ENCODE measurements at regions of chr3 and their contacts with region 1.

Region 1: DNA sequence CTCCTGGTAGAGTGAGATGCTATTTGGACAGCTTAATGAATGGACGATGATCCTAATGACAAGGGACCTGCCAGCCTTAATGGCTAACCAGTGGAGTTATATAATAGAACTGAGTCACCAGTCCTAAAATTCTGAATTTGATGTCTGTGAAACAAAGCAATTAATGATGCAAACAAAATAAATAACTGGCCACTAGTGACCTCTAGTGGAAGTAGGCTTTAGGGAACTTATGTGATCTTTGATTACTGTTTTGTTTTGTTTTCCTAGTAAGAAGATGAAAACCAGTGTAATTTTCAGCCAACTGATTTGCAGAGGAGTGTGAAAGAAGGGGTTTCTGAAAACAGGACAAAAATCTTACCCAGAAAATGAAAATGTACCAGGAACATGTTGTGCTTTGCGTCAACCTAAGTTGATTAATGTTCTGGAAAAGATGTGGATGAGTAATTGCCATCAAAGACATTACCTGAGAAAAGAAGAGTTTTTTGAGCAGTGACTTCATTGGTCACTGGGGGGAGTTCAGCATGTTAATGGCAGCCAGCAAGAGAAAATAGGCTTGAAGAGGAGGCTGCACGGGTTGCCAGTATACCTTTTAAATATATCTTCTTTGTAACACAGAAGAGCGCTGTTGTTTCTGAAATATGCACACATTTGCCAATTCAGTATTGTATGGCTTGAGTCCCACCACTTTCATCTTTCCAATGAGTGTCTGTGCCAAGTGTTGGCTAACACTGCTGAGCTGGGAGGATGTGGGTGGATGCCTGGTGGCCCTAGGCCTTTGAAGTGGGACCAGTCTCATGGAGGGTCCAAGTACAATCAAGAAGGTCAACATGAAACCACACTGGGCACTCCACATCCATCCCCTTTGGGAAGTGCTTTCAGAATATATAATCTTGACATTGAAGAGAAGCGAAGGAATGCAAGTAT is 9.3 kb downstream of the VEPH1 start:
- ATAC-seq: peak in 7 of 8 experiments; percentile 21 to 76 (median 42)
- H3K4me3 ChIP-seq: no peak overlapping the region
- H3K27ac ChIP-seq: no peak overlapping the region
- H3K4me1 ChIP-seq: no peaks in the 10 kb centered on the region

Region 2: GRCh38 chr3:157174649-157175498 is 319.0 kb before region 1 on chr3:
- in situ Hi-C with region 1: loop called in 1 of 9 experiments (anchors 25 kb)
- ATAC-seq: peak; percentile 83 to 95 (median 91)
- H3K4me3 ChIP-seq: peak overlapping the region; percentile 46 to 71 (median 52)
- H3K27ac ChIP-seq: peak overlapping the region; percentile 78 to 92
- H3K4me1 ChIP-seq: peaks cover 6 to 7% of the 10 kb centered on the region in 2 donors

Region 3: DNA sequence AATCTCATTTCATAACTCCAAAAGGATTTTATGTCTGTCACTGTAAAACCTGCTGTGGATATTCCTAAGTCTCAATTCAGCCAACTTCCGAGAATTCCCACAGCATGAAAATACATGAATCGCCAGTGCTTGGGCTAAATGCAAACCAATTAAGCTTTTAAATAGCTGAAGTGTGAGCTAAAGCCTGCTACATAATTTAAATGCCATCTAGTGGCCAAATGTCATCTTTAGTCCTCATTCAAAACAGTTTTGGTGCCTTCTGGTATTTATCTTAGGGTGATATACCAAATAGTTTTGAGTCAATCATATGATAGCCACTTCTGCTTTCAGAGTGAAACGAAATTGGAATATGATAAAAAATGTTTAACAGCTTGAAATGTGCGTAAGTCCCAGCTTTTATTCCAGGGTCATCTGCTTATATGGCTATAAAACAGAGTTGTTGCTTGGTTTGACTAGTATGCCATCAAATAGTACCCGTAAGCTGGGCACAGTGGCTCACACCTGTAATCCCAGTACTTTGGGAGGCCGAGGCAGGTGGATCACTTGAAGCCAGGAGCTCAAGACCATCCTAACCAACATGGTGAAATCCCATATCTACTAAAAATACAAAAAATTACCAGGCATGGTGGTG is 292.1 kb before region 1 on chr3:
- in situ Hi-C with region 1: loop called in 7 of 9 experiments (anchors 10 to 25 kb)
- ATAC-seq: peak in 4 of 8 experiments; percentile 43 to 88 (median 80)
- H3K4me3 ChIP-seq: no peak overlapping the region
- H3K27ac ChIP-seq: no peak overlapping the region
- H3K4me1 ChIP-seq: peaks cover 3 to 5% of the 10 kb centered on the region in 2 donors

Region 4: DNA sequence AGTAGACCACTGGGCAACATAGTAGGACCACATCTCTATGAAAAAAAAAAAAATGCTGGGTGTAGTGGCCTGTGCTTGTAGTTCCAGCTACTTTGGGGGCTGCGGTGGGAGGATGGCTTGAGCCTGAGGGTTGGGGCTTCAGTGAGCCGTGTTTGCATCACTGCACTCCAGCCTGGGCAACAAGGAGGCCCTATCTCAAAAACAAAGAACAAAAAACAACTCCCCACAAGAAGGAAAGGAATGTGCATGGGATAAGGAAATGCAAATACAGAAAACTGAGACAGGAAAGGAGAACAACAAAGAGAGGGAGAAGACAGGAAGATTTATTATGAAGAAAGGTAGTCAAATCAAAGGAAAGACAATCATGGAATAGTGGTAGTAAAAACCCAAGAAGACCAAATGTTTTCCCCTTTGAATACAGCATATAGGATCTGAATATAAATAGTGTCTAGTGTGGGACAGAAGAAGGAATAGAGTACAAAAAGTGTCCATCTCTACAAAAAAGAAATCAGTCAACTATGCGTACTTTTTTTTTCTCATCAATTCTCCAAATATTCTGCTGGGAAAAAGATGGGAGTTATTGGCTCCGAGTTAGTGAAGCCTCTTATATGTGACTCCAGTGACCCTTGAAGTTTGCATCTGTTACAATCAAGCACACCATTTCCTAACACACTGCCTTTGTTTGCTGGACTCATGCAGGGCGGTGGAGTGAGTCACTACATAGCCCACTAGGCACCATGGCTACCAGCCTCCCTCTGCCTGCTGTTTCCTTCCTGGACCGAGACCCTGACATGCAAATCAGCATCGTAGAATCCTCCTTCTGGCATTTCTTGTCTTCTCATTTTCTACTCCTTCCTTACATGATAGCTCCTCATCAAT is 158.5 kb before region 1 on chr3:
- in situ Hi-C with region 1: no loop called
- ATAC-seq: peak in 7 of 8 experiments; percentile 41 to 99 (median 99)
- H3K4me3 ChIP-seq: peak overlapping the region in 1 of 5 donors; percentile 19
- H3K27ac ChIP-seq: peak overlapping the region; percentile 46 to 74
- H3K4me1 ChIP-seq: peaks cover 11 to 18% of the 10 kb centered on the region in 2 donors

Region 5: GRCh38 chr3:157347577-157348303 is 146.1 kb before region 1 on chr3:
- in situ Hi-C with region 1: no loop called
- ATAC-seq: no peak
- H3K4me3 ChIP-seq: no peak overlapping the region
- H3K27ac ChIP-seq: no peak overlapping the region
- H3K4me1 ChIP-seq: no peaks in the 10 kb centered on the region

Region 6: DNA sequence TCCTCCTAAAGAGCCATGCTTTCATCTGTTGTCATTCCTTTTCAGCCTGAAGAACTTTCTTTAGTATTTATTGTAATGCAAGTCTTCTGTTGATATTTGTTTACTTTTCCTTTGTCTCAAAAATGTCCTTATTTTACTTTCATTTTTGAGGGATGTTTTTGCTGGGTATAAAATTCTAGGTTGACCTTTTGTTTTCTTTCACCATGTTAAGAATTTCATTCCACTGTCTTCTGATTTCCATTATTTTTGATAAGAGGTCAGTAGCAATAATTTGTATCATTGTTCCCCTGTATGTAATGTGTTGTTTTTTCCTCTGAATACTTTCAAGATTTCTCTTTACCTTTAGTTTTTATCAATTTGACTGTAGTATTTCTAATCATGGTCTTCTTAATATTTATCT is 707.1 kb after region 1 on chr3:
- in situ Hi-C with region 1: no loop called
- ATAC-seq: no peak
- H3K4me3 ChIP-seq: no peak overlapping the region
- H3K27ac ChIP-seq: no peak overlapping the region
- H3K4me1 ChIP-seq: no peaks in the 10 kb centered on the region